ENCODE measurements at regions of chr11 and their contacts with region 1.

Region 1: DNA sequence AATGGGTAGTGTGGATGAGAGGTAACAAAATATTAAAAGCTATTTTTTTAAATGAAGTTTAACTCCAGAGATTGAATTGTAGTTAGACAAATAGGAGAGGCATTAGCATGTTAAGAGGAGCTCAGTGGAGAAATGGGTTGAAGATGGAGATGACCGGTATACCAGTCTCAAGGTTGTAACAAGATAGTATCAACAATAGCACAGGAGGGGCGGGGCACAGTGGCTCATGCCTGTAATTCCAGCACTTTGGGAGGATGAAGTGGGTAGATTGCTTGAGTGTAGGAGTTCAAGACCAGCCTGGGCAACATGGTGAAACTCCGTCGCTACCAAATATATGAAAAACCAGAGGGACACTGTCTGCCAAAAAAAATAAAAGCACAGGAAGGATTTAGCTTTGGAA is 6.0 kb upstream of the ANKRD42 start:
- DNase-seq: no peak
- ATAC-seq: peak; percentile 29
- H3K4me3 ChIP-seq: no peak overlapping the region
- H3K27ac ChIP-seq: no peak overlapping the region
- H3K4me1 ChIP-seq: peaks cover 0 to 4% of the 10 kb centered on the region in 2 experiments; a peak in 1 of 5 replicates
- H3K27me3 ChIP-seq: no peaks in the 10 kb centered on the region
- CTCF ChIP-seq: no peak
- EP300 ChIP-seq: no peak
- POLR2A ChIP-seq: peak; percentile 33; the same call in 1 of the 2 replicates
- RAD21 ChIP-seq: no peak

Region 2: GRCh38 chr11:82117362-82117761 is 1070.1 kb before region 1 on chr11:
- CTCF ChIA-PET with region 1: no interaction called
- POLR2A ChIA-PET with region 1: no interaction called
- in situ Hi-C with region 1: no loop called
- intact Hi-C with region 1: no loop called
- DNase-seq: no peak
- ATAC-seq: no peak
- H3K4me3 ChIP-seq: no peak overlapping the region
- H3K27ac ChIP-seq: no peak overlapping the region
- H3K4me1 ChIP-seq: no peaks in the 10 kb centered on the region
- H3K27me3 ChIP-seq: no peaks in the 10 kb centered on the region
- CTCF ChIP-seq: no peak
- EP300 ChIP-seq: no peak
- POLR2A ChIP-seq: no peak
- RAD21 ChIP-seq: no peak

Region 3: GRCh38 chr11:82889133-82890001 is 298.1 kb before region 1 on chr11:
- CTCF ChIA-PET with region 1: no interaction called
- POLR2A ChIA-PET with region 1: no interaction called
- in situ Hi-C with region 1: no loop called
- intact Hi-C with region 1: no loop called
- DNase-seq: no peak
- ATAC-seq: peak; percentile 62
- H3K4me3 ChIP-seq: no peak overlapping the region
- H3K27ac ChIP-seq: no peak overlapping the region
- H3K4me1 ChIP-seq: peaks cover 0 to 7% of the 10 kb centered on the region in 2 experiments; a peak in 2 of 5 replicates
- H3K27me3 ChIP-seq: no peaks in the 10 kb centered on the region; a peak in 1 of 5 replicates
- CTCF ChIP-seq: no peak
- EP300 ChIP-seq: no peak
- POLR2A ChIP-seq: no peak
- RAD21 ChIP-seq: no peak

Region 4: GRCh38 chr11:83174008-83174407 is 13.5 kb before region 1 on chr11:
- CTCF ChIA-PET with region 1: no interaction called
- POLR2A ChIA-PET with region 1: interaction called, 14 read pairs
- in situ Hi-C with region 1: no loop called
- intact Hi-C with region 1: no loop called
- DNase-seq: no peak
- ATAC-seq: no peak
- H3K4me3 ChIP-seq: no peak overlapping the region
- H3K27ac ChIP-seq: no peak overlapping the region
- H3K4me1 ChIP-seq: peaks cover 0 to 2% of the 10 kb centered on the region in 2 experiments; a peak in 2 of 5 replicates
- H3K27me3 ChIP-seq: no peaks in the 10 kb centered on the region
- CTCF ChIP-seq: no peak
- EP300 ChIP-seq: no peak
- POLR2A ChIP-seq: no peak
- RAD21 ChIP-seq: no peak

Measured in K562 (cell line).